Right cardiac atrium (tissue), 5 donors: ENCODE measurements at regions of chr18 and their contacts with region 1.

Region 1: DNA sequence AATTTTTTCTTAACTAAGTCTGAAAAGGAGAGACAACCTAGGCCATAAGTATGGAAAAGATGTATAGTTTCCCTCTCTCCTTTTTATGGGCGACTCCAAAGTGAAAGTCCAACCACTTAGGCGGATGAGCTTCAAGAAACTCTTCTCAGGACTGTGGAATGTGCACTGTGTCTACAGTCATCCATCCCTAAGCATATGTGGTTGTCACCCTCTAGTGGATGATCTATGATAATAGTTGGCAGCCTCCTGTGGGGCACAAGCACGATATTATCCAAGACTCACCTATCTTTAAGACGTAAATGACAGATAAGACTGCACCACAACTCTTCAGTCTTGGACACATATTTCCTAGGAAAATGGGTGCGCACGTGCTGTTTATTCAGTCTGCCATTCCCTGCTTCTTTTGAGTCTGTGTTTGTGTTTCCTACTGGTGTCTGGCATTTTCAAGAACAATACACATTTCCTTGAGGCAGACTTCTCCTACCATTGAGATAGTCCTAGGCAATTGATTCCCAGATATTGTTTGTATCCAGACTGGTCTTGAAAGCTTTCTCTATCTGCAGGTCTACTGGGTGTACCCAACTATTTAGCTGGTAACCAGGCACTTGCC is 145.5 kb upstream of the CTAGE1 start:
- DNase-seq: no peak
- ATAC-seq: peak; percentile 73 to 77
- H3K4me3 ChIP-seq: peak overlapping the region; percentile 68
- H3K27ac ChIP-seq: no peak overlapping the region
- H3K4me1 ChIP-seq: no peaks in the 10 kb centered on the region
- H3K27me3 ChIP-seq: no peaks in the 10 kb centered on the region

Region 2: DNA sequence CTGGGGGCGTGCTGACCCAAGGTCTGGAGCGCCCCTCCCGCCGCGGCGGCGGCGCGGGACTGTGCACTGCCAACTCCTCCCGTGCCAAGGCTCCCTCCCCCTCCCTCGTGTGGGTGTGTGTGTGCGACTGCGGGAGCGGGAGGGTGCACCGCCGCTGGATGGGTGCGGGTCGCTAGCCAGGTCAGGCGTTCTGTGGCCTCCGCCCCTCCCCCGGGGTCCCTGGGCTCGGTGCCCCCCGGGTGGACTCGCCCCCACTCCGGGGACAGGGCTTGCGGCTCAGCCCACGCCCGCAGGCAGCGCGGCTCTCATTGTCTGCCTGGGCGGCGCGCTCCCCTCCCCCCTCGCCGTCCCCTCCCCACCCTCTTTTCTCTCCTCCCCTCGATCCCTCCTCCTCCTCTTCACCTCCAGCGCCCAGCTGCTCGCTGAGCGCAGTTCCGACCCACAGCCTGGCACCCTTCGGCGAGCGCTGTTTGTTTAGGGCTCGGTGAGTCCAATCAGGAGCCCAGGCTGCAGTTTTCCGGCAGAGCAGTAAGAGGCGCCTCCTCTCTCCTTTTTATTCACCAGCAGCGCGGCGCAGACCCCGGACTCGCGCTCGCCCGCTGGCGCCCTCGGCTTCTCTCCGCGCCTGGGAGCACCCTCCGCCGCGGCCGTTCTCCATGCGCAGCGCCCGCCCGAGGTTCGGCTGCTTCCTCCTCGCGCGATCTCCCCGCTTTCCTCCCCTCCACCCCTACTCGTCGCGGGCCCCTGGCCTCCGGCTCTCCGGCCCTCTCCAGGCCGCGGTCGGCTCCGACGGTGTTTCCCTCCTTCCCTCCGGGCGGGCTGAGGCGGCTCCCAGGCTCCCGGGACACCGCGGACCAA is 394.0 kb before region 1 on chr18 and contains the start of gene GATA6:
- intact Hi-C with region 1: loop called in 3 of 4 experiments (anchors 2 to 5 kb)
- DNase-seq: peak; percentile 95 to 98 (median 97)
- ATAC-seq: peak; percentile 87
- H3K4me3 ChIP-seq: peak within 1 kb of the TSS; percentile 66
- H3K27ac ChIP-seq: peak within 1 kb of the TSS; percentile 86
- H3K4me1 ChIP-seq: no peaks in the 10 kb centered on the region
- H3K27me3 ChIP-seq: no peaks in the 10 kb centered on the region
- total RNA-seq, gene GATA6: 63.2 to 85.8 (median 77.9) TPM

Region 3: DNA sequence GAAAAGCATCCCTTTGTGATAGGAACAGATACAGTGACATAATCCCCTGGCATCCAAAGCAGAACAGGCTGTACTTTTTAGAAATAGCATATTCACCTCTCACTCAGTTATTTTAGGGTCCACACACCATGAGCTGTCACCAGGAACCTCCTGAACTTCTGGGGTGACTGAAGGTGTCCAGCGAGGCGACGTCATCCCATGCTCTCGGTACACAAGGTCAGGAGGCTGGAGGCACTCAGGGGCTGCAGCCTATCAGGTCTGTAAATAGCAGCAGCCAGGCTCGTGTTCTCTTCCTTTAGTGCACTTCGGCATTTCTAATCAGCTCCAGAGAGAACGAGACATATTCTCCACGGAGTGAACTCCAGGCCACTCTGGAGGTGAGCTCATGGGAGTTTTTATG is 295.5 kb before region 1 on chr18:
- intact Hi-C with region 1: loop called in 2 of 4 experiments (anchors 5 kb)
- DNase-seq: peak; percentile 79 to 88 (median 87)
- ATAC-seq: peak; percentile 95
- H3K4me3 ChIP-seq: no peak overlapping the region
- H3K27ac ChIP-seq: peak overlapping the region; percentile 94
- H3K4me1 ChIP-seq: peaks cover 4% of the 10 kb centered on the region
- H3K27me3 ChIP-seq: no peaks in the 10 kb centered on the region

Region 4: DNA sequence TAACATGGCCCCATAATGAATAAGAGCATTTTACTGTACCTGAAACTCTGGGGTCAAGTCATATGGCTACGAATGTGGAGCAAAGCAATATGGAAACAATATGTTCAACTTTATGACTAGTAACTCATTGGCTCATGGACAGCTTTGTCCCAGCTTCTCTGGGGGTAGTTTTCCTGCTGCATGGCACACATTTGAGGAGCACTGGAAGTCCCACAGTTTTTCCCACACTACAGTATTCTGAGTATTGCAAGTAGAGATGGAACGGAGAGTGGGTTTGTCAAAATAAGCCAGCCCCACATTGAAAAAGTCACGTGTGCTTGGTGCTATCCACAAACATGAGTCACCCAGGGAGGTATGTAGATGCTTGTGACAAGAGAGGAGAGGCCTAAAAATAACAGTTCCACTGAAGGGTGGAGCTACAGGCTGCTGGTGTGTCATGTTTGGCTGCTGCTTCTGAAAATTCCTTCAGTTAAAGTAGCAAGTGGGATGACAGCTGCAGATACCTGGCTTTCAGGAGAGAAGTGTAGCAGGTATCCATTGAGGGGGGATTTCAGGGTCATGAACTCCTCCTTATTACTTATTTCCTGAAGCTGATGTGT is 97.2 kb before region 1 on chr18:
- intact Hi-C with region 1: loop called in 3 of 4 experiments (anchors 5 to 10 kb)
- DNase-seq: peak in 1 of 3 donors; percentile 52
- ATAC-seq: peak; percentile 86 to 88
- H3K4me3 ChIP-seq: no peak overlapping the region
- H3K27ac ChIP-seq: peak overlapping the region; percentile 85
- H3K4me1 ChIP-seq: peaks cover 10% of the 10 kb centered on the region
- H3K27me3 ChIP-seq: no peaks in the 10 kb centered on the region